BJ (cell line): ENCODE measurements at regions of chr17 and their contacts with region 1.

Region 1: GRCh38 chr17:7982666-7983065 is 19.7 kb upstream of the GUCY2D start:
- DNase-seq: no peak
- H3K4me3 ChIP-seq: no peak overlapping the region
- H3K27me3 ChIP-seq: no peaks in the 10 kb centered on the region
- CTCF ChIP-seq: peak; percentile 26

Region 2: GRCh38 chr17:7583253-7584109 is 399.2 kb before region 1 on chr17 and contains the start of gene MPDU1:
- CTCF ChIA-PET with region 1: no interaction called
- POLR2A ChIA-PET with region 1: no interaction called
- DNase-seq: peak; percentile 87
- H3K4me3 ChIP-seq: peak within 1 kb of the TSS; percentile 71
- H3K27me3 ChIP-seq: no peaks in the 10 kb centered on the region
- CTCF ChIP-seq: no peak
- polyA plus RNA-seq, gene MPDU1: 142 and 174 TPM in 2 replicates

Region 3: DNA sequence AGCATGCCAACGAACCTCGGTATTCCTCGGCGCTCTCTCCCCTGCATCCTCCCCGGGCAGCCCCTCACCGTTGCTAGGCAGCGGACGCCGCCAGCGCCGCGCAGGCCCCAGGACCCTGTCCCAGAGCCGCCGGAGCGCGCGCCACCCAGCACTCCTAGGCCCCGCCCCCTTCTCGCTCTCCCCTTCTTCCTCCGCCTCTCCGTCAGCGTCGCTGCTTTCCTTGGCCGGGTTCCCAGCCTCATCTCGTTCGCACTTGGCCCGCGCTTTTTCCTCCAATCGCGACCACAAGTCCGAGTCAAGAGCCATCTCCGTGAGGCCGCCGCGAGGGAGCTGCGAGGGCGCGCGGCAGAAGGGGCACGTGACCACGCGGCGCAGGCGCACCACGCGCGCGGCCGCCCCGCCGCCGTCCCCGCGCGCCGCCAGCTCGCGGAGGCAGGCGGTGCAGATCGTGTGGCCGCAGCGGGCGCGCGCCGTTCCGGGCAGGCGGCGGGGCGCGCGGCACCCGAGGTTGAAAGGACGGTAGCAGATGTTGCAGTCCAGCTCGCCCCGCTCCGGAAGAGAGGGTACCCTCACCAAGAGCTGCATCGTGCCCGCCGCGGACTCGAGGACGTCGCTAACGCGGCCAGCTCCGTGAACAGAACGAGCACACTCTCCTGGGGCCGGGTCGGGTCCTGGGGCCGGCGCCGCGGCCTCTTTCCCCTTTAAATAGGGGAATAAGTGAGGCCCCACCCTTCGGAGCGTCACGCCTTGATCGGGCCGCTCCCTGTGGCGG is 66.9 kb before region 1 on chr17 and contains the start of gene RNF227:
- CTCF ChIA-PET with region 1: interaction called, 13 read pairs
- POLR2A ChIA-PET with region 1: no interaction called
- DNase-seq: peak; percentile 82
- H3K4me3 ChIP-seq: peak within 1 kb of the TSS; percentile 52
- H3K27me3 ChIP-seq: no peaks in the 10 kb centered on the region
- CTCF ChIP-seq: no peak
- polyA plus RNA-seq, gene RNF227: 2.2 and 2.9 TPM in 2 replicates

Region 4: GRCh38 chr17:8041249-8041928 is 58.7 kb after region 1 on chr17:
- CTCF ChIA-PET with region 1: interaction called, 13 read pairs
- POLR2A ChIA-PET with region 1: no interaction called
- DNase-seq: peak; percentile 13
- H3K4me3 ChIP-seq: no peak overlapping the region
- H3K27me3 ChIP-seq: peaks cover 17% of the 10 kb centered on the region
- CTCF ChIP-seq: peak; percentile 62

Region 5: GRCh38 chr17:8053598-8053997 is 70.9 kb after region 1 on chr17:
- CTCF ChIA-PET with region 1: no interaction called
- POLR2A ChIA-PET with region 1: no interaction called
- DNase-seq: no peak
- H3K4me3 ChIP-seq: no peak overlapping the region
- H3K27me3 ChIP-seq: peaks cover 10% of the 10 kb centered on the region
- CTCF ChIP-seq: no peak